ENCODE measurements at regions of chr7 and their contacts with region 1.

Region 1: DNA sequence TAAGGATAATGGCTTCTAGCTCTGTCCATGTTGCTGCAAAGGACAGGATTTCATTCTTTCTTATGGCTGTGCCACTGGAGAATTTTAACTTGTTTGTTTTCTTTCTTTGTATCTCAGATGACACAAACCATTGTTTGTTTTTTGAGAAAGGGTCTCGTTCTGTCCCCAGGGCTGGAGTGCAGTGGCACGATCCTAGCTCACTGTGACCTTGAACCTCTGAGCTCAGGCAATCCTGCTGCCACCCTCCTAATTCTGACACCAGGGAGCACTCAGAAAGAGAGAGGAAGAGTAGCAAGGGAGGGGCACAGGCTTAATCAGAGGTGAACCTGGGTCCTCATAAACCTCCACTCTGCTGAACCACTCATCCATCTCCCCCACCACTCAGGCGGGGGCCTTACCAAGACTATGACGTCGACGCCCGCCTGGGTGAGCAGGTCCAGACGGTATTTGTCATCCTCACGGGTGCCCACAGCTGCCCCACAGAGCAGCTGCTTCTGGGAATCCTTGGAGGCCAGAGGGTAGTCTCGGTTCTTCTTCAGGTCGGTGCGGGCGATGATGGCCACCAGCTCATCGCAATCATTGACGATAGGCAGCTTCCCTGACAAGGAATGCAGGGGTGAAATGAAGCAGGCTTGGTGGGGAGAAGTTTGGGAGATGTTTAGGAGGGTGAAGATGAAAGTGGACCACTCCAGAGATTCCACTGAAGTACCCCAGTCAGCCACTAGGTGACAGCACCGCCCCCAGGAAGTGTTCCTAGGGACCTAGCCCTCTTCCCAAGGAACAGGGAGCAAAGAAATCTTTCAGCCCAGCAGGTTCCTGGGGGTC is 11.6 kb downstream of the IMPDH1 start:
- DNase-seq: peak; percentile 54 to 79 (median 74)
- H3K4me3 ChIP-seq: no peak overlapping the region
- H3K27ac ChIP-seq: no peak overlapping the region
- H3K4me1 ChIP-seq: no peaks in the 10 kb centered on the region
- H3K27me3 ChIP-seq: no peaks in the 10 kb centered on the region
- CTCF ChIP-seq: peak; percentile 83 to 88 (median 86)
- EP300 ChIP-seq: no peak
- POLR2A ChIP-seq: no peak

Region 2: DNA sequence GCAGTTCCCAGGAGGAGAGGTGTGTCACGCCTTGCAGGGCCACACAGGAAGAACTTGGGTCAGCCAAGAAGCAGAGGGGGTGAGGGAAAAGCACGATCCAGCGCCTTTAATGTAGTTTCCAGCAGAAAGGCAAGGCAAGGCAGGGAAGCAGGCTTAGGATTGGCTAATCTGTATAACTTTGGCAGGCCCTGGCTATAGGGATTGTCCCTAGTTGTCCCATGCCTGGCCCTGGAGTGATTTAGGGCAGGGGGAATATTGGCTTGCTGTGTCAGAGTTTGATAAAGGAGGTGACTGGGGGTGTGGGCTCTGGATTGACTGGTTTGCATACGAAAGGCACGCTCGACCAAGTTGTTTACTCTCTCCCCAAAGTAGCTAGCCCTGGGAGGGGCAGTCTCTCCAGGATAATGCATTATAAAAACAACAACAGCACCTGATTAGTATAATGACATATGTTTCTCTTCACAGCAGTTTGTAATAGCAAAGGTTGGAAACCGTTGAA is 99.1 kb before region 1 on chr7:
- intact Hi-C with region 1: loop called in 1 of 4 experiments (anchors 5 kb)
- DNase-seq: no peak
- H3K4me3 ChIP-seq: no peak overlapping the region
- H3K27ac ChIP-seq: no peak overlapping the region
- H3K4me1 ChIP-seq: no peaks in the 10 kb centered on the region
- H3K27me3 ChIP-seq: no peaks in the 10 kb centered on the region
- CTCF ChIP-seq: no peak
- EP300 ChIP-seq: no peak
- POLR2A ChIP-seq: no peak

Region 3: DNA sequence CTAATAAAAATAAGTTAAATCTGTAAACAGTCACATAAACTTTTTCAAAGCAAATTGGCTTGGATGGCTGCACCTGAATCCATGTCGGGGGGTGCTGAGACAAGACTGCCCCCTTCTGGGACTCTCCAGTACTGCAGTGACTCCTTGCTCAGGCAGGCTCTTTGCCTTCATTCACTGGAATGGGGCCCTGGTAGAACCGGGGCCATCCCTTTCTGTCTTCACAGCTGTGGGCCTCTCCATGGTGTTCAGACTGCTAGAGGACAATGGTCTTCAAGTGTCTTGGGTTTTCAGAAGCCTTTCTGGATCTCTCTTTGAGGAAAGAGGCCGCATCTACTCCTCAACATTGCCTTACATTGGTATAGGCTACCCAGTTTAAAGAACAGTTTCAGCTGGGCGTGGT is 27.6 kb after region 1 on chr7:
- intact Hi-C with region 1: loop called in 1 of 4 experiments (anchors 2 kb)
- DNase-seq: peak; percentile 57 to 80 (median 77)
- H3K4me3 ChIP-seq: no peak overlapping the region
- H3K27ac ChIP-seq: no peak overlapping the region
- H3K4me1 ChIP-seq: peaks cover 6% of the 10 kb centered on the region
- H3K27me3 ChIP-seq: no peaks in the 10 kb centered on the region
- CTCF ChIP-seq: peak; percentile 39 to 75 (median 55)
- EP300 ChIP-seq: no peak
- POLR2A ChIP-seq: no peak

Region 4: DNA sequence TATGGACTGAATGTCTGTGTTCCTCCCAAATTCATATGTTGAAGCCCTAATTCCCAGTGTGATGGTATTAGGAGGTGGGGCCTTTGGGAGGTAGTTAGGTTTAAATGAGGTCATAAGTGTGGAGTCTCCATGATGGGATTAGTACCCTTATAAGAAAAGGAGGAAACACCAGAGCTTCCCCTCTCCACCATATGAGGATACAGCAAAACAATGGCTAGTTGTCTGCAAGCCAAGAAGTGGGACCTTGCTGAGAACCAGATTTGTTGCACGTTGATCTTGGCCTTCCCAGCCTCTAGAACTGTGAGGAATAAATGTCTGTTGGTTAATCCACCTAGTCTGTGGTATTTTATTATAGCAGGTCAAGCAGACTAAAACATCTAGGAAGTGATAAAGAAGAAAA is 928.8 kb after region 1 on chr7:
- intact Hi-C with region 1: no loop called
- DNase-seq: no peak
- H3K4me3 ChIP-seq: no peak overlapping the region
- H3K27ac ChIP-seq: no peak overlapping the region
- H3K4me1 ChIP-seq: no peaks in the 10 kb centered on the region
- H3K27me3 ChIP-seq: no peaks in the 10 kb centered on the region
- CTCF ChIP-seq: no peak
- EP300 ChIP-seq: no peak
- POLR2A ChIP-seq: no peak

Measured in ovary (tissue), 10 donors.